ENCODE measurements at regions of chr14 and their contacts with region 1.

Region 1: DNA sequence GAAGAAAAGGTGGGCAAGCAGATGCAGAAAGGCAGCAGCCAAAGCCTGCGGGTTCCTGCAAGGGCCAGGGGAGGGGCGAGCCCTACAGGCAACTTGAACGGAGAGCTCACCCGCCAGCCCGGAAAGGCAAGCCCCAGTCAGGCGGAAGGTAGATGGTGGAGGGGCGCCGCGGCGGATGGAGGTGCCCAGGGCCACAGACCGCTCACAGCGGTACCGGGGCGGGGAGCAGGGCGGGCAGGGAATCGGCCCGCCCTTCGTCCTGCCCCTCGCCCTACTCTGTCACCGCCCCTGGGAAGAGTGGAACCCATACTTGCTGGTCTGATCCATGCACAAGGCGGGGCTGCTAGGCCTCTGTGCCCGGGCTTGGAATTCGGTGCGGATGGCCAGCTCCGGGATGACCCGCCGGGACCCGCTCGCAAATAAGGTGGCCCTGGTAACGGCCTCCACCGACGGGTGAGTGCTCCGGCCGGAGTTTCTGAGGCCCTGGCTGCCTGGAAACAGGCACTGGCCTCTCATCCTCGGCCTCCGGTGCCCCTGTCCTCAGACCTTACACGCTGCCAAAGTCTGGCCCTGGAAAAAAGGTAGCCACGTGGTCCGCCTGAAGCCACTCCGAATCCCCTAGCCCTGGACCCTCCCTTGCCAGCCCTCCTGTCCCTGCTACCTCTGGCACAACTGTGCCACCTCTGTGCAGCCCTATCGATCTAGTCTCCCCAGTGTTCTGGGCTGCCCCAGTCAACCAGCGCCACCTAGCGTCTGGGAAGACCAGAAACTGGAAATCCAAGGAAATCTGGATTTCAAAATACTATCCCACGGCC is at the start of gene DHRS4:
- DNase-seq: peak; percentile 71
- H3K4me3 Mint-ChIP-seq: peak within 1 kb of the TSS; percentile 92
- H3K27ac Mint-ChIP-seq: peak within 1 kb of the TSS; percentile 81
- H3K4me1 Mint-ChIP-seq: peaks cover 16% of the 10 kb centered on the region
- H3K27me3 Mint-ChIP-seq: no peaks in the 10 kb centered on the region
- total RNA-seq, gene DHRS4: 13.9 and 18.4 TPM in 2 replicates

Region 2: GRCh38 chr14:23588884-23589598 is 364.6 kb before region 1 on chr14:
- intact Hi-C with region 1: loop called (anchors 1 kb)
- DNase-seq: peak; percentile 41
- H3K4me3 Mint-ChIP-seq: no peak overlapping the region
- H3K27ac Mint-ChIP-seq: no peak overlapping the region
- H3K4me1 Mint-ChIP-seq: no peaks in the 10 kb centered on the region
- H3K27me3 Mint-ChIP-seq: peaks cover 9% of the 10 kb centered on the region

Region 3: DNA sequence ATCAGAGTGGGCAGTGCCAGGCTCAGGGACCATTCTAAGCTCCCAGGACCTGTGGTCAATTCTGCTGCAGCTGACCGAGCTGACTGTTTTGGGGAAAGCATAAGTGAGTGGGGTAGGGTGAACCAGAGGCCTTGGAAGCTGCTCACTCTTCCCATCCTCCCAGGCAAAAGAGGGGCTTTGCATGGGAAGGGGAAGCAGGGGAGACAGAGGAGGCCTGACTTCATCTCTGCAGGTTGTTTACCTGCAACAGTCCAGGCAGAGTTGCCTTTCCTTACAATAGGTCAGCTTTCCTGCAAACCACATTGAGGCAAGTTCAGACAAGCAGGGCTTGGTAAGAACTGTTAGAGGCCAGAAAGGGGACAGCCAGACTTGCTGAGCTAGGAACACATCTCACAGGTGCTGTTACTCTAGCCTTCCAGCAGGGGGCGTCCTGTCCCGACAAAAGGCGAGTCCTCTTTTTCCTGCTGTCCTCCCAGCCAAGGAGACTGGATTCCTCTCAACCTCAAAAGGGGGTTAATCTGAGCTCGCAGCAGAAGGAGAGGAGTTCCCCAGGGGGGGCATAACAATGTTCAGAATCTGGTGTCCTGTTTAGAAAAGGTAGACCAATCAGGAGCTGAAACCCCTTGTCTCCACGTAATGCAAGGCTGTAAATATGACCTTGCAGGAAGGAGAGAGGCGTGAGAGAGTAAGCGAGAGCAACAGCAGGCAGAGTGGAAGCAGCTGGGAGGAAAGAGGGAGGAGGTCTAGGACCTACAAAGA is 321.8 kb before region 1 on chr14:
- intact Hi-C with region 1: loop called (anchors 2 kb)
- DNase-seq: peak; percentile 53
- H3K4me3 Mint-ChIP-seq: peak overlapping the region; percentile 16
- H3K27ac Mint-ChIP-seq: no peak overlapping the region
- H3K4me1 Mint-ChIP-seq: peaks cover 16% of the 10 kb centered on the region
- H3K27me3 Mint-ChIP-seq: peaks cover 2% of the 10 kb centered on the region

Region 4: DNA sequence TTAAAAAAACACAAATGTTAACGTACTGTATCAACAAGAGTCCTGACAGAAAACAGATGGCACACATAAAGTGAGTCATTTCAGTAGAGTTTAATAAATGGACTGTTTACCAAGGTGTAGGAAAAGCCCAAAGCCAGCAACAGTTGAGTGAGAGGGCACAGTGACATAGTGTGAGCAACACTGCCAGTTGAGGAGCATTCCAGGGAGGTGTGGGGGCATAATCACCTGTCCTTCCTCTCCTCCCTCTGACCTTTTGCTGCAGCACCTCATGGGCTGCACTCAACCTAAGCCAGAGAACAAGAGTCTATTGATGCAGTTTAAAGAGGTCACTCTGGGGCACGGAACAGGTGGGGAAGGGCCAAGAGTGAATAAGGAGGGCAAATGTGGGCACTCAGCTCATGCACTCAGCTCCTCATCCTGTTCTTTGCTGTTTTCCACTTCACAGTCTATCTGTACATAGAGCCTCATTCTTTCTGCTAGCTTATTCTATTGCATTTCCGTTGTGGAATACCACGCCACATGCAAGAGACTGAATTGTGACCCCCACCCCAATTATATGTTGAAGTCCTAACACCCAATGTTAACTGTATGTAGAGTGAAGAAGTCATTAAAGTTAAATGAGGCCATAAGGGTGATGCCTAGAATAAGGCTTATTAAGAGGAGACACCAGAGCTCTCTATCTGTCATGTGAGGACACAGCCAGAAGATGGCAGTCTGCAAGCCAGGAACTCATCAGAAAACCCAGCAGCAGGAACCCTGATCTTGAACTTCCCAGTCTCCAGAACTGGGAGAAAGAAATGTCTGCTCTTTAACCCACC is 288.1 kb before region 1 on chr14:
- intact Hi-C with region 1: loop called (anchors 1 kb)
- DNase-seq: no peak
- H3K4me3 Mint-ChIP-seq: no peak overlapping the region
- H3K27ac Mint-ChIP-seq: no peak overlapping the region
- H3K4me1 Mint-ChIP-seq: no peaks in the 10 kb centered on the region
- H3K27me3 Mint-ChIP-seq: peaks cover 7% of the 10 kb centered on the region

Region 5: DNA sequence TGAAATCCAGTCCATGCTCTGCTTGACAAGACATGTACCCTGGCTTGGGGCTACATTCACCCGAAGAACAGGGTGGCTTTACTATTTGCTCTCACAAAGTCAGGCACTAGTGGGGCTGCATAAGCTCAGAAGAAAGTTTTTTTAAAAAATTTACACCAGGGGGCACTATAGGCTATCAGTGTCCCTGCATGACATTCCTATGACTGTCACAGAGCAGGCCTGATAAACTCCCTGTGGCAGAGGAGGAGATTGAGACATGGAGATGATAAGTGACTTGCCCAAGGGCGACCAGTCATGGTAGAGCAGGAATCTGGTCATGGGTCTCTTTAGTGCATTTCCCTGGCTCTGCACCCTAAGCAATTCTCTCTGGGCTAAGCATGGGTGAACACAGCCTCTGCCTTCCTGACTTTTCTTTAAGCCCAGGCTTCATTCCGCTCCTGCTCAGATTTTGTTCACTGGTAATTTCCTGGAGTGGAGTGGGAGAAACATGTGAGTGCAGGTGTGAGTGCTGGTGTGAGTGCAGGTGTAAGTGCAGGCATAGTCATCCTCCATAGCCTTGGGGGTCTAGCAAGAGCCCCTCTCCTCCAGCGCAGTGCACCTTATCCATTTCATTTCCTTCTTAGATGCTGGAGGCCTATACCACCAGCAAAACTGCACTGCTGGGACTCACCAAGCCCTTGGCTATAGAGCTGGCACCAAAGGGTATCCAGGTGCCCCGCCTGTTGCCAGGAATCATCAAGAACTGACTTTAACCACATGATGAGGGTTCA is 225.9 kb before region 1 on chr14:
- intact Hi-C with region 1: loop called (anchors 1 kb)
- DNase-seq: no peak
- H3K4me3 Mint-ChIP-seq: no peak overlapping the region
- H3K27ac Mint-ChIP-seq: no peak overlapping the region
- H3K4me1 Mint-ChIP-seq: no peaks in the 10 kb centered on the region
- H3K27me3 Mint-ChIP-seq: peaks cover 2% of the 10 kb centered on the region

Region 6: GRCh38 chr14:23910101-23910875 is 43.4 kb before region 1 on chr14:
- intact Hi-C with region 1: loop called (anchors 1 kb)
- DNase-seq: no peak
- H3K4me3 Mint-ChIP-seq: no peak overlapping the region
- H3K27ac Mint-ChIP-seq: no peak overlapping the region
- H3K4me1 Mint-ChIP-seq: no peaks in the 10 kb centered on the region
- H3K27me3 Mint-ChIP-seq: peaks cover 9% of the 10 kb centered on the region

Region 7: DNA sequence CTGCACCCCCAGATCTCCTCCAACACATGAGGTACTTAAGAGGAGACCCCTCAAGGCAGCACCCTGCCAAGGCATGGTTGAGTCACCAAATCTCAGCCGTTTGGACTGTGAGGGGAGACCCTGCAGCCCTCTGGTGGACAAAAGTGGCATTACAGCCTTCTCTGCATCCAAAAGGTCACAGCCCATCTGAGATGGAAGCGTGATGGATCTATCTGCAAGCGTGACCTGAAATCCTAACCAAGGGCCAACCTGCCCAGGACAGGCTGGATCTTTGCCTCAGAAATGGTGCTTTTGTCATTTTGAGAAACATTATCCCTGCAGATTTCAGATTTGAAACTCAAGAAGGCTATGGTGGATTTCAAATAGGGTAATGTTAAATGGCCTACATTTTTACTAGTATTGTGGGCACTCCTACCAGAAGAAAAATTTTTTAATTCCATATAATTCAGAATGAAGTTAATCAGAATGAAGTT is 23.8 kb before region 1 on chr14:
- intact Hi-C with region 1: loop called (anchors 2 kb)
- DNase-seq: peak; percentile 66
- H3K4me3 Mint-ChIP-seq: no peak overlapping the region
- H3K27ac Mint-ChIP-seq: no peak overlapping the region
- H3K4me1 Mint-ChIP-seq: no peaks in the 10 kb centered on the region
- H3K27me3 Mint-ChIP-seq: peaks cover 6% of the 10 kb centered on the region

Region 8: GRCh38 chr14:23942387-23942986 is 11.2 kb before region 1 on chr14:
- intact Hi-C with region 1: no loop called
- DNase-seq: no peak
- H3K4me3 Mint-ChIP-seq: no peak overlapping the region
- H3K27ac Mint-ChIP-seq: no peak overlapping the region
- H3K4me1 Mint-ChIP-seq: no peaks in the 10 kb centered on the region
- H3K27me3 Mint-ChIP-seq: no peaks in the 10 kb centered on the region